H1 (cell line): ENCODE measurements at regions of chr12 and their contacts with region 1.

Region 1: GRCh38 chr12:132544083-132544402 is 54.1 kb downstream of the FBRSL1 start:
- DNase-seq: no peak
- H3K4me3 ChIP-seq: no peak overlapping the region
- H3K27ac ChIP-seq: no peak overlapping the region
- H3K4me1 ChIP-seq: no peaks in the 10 kb centered on the region; a peak in 1 of 7 replicates
- H3K27me3 ChIP-seq: peaks cover 60 to 87% (median 84%) of the 10 kb centered on the region in 4 experiments
- CTCF ChIP-seq: peak in 2 of 3 experiments; percentile 43 to 56; a peak in 3 of 4 replicates
- EP300 ChIP-seq: no peak
- POLR2A ChIP-seq: no peak
- RAD21 ChIP-seq: peak; percentile 58 to 68

Region 2: GRCh38 chr12:132554842-132555630 is 11.0 kb after region 1 on chr12:
- CTCF ChIA-PET with region 1: interaction called, 11 read pairs
- POLR2A ChIA-PET with region 1: interaction called, 6 read pairs
- DNase-seq: peak in 1 of 2 experiments; percentile 70
- H3K4me3 ChIP-seq: no peak overlapping the region
- H3K27ac ChIP-seq: no peak overlapping the region
- H3K4me1 ChIP-seq: peaks cover 0 to 8% (median 6%) of the 10 kb centered on the region in 4 experiments; a peak in 5 of 7 replicates
- H3K27me3 ChIP-seq: peaks cover 32 to 87% (median 77%) of the 10 kb centered on the region in 4 experiments
- CTCF ChIP-seq: peak in 2 of 3 experiments; percentile 53 to 64; a peak in 3 of 4 replicates
- EP300 ChIP-seq: no peak
- POLR2A ChIP-seq: no peak
- RAD21 ChIP-seq: peak; percentile 42 to 50; a peak in 3 of 4 replicates